Activated CD8-positive, alpha-beta T cell treated with anti-CD3 and anti-CD28 coated beads for 36 hours (primary cell): ENCODE measurements at regions of chr22 and their contacts with region 1.

Region 1: GRCh38 chr22:41237707-41238569 is 2.8 kb downstream of the CHADL start:
- DNase-seq: peak; percentile 86
- ATAC-seq: peak; percentile 96
- H3K4me3 Mint-ChIP-seq: peak overlapping the region; percentile 59
- H3K27ac Mint-ChIP-seq: no peak overlapping the region
- H3K4me1 Mint-ChIP-seq: peaks cover 7% of the 10 kb centered on the region
- H3K27me3 Mint-ChIP-seq: no peaks in the 10 kb centered on the region
- CTCF ChIP-seq: peak; percentile 12

Region 2: GRCh38 chr22:41074941-41075710 is 162.8 kb before region 1 on chr22:
- CTCF ChIA-PET with region 1: no interaction called
- POLR2A ChIA-PET with region 1: no interaction called
- intact Hi-C with region 1: no loop called
- DNase-seq: no peak
- ATAC-seq: no peak
- H3K4me3 Mint-ChIP-seq: no peak overlapping the region
- H3K27ac Mint-ChIP-seq: no peak overlapping the region
- H3K4me1 Mint-ChIP-seq: no peaks in the 10 kb centered on the region
- H3K27me3 Mint-ChIP-seq: no peaks in the 10 kb centered on the region
- CTCF ChIP-seq: no peak

Region 3: DNA sequence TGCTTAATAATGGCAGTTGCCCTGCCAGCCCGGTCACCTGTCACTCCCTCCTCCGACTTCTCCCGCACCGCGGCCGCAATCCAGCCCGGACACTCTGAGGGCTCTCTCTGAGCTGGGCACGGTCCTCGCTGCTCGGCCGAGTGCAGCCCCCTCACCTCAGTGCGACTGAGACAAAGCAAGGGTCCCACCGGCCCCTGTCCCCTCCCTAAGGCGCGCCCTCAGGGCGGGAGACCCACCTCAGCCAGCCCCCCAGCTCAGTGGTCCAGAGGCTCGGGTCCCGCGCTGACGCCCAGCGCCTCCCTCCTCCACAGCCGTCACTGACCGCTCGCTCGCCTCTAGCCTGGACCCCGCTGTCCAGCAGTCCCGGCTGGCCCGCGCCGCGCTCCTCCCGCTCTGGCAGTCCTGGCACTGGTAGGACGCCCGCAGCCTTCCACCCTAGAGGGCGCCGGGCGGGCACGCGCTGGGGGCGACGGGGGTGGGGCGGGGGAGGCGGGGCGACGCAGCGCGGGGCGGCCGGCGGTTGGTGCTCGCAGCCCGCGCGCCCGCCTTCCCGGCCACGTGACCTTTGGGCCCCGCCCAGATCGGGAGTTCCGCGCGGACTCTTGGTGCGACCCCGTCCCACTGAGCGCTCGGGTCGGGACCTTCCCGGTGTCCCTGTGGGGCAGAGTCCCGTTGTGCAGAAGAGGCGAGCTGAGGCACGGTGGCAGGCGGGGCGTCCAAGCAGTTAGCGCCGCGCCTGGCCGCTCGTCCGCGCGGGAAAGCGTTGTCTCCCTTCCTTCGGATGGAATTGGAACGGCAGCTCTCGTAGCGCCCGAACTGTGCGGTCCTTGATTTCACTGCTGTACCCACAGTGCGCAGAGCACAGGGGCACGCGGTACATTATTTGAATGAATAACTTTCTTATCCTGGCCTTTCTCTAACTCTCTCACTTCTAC is 40.6 kb before region 1 on chr22:
- CTCF ChIA-PET with region 1: interaction called, 15 read pairs
- POLR2A ChIA-PET with region 1: interaction called, 3 read pairs
- intact Hi-C with region 1: no loop called
- DNase-seq: peak; percentile 79
- ATAC-seq: peak; percentile 90
- H3K4me3 Mint-ChIP-seq: peak overlapping the region; percentile 74
- H3K27ac Mint-ChIP-seq: no peak overlapping the region
- H3K4me1 Mint-ChIP-seq: peaks cover 7% of the 10 kb centered on the region
- H3K27me3 Mint-ChIP-seq: peaks cover 9% of the 10 kb centered on the region
- CTCF ChIP-seq: no peak

Region 4: GRCh38 chr22:41206719-41207118 is 31.2 kb before region 1 on chr22:
- CTCF ChIA-PET with region 1: interaction called, 14 read pairs
- POLR2A ChIA-PET with region 1: interaction called, 3 read pairs
- intact Hi-C with region 1: no loop called
- DNase-seq: no peak
- ATAC-seq: no peak
- H3K4me3 Mint-ChIP-seq: peak overlapping the region; percentile 48
- H3K27ac Mint-ChIP-seq: peak overlapping the region; percentile 52
- H3K4me1 Mint-ChIP-seq: peaks cover 26% of the 10 kb centered on the region
- H3K27me3 Mint-ChIP-seq: peaks cover 3% of the 10 kb centered on the region
- CTCF ChIP-seq: no peak

Region 5: GRCh38 chr22:41217553-41218157 is 20.3 kb before region 1 on chr22:
- CTCF ChIA-PET with region 1: interaction called, 19 read pairs
- POLR2A ChIA-PET with region 1: interaction called, 3 read pairs
- intact Hi-C with region 1: no loop called
- DNase-seq: peak; percentile 65
- ATAC-seq: peak; percentile 99
- H3K4me3 Mint-ChIP-seq: peak overlapping the region; percentile 51
- H3K27ac Mint-ChIP-seq: peak overlapping the region; percentile 84
- H3K4me1 Mint-ChIP-seq: peaks cover 23% of the 10 kb centered on the region
- H3K27me3 Mint-ChIP-seq: no peaks in the 10 kb centered on the region
- CTCF ChIP-seq: no peak

Region 6: GRCh38 chr22:41226723-41227655 is 10.9 kb before region 1 on chr22:
- CTCF ChIA-PET with region 1: interaction called, 15 read pairs
- POLR2A ChIA-PET with region 1: interaction called, 8 read pairs
- intact Hi-C with region 1: no loop called
- DNase-seq: no peak
- ATAC-seq: no peak
- H3K4me3 Mint-ChIP-seq: no peak overlapping the region
- H3K27ac Mint-ChIP-seq: no peak overlapping the region
- H3K4me1 Mint-ChIP-seq: no peaks in the 10 kb centered on the region
- H3K27me3 Mint-ChIP-seq: no peaks in the 10 kb centered on the region
- CTCF ChIP-seq: no peak

Region 7: GRCh38 chr22:41334215-41334614 is 96.3 kb after region 1 on chr22:
- CTCF ChIA-PET with region 1: no interaction called
- POLR2A ChIA-PET with region 1: no interaction called
- intact Hi-C with region 1: no loop called
- DNase-seq: no peak
- ATAC-seq: no peak
- H3K4me3 Mint-ChIP-seq: no peak overlapping the region
- H3K27ac Mint-ChIP-seq: no peak overlapping the region
- H3K4me1 Mint-ChIP-seq: peaks cover 10% of the 10 kb centered on the region
- H3K27me3 Mint-ChIP-seq: no peaks in the 10 kb centered on the region
- CTCF ChIP-seq: no peak

Region 8: DNA sequence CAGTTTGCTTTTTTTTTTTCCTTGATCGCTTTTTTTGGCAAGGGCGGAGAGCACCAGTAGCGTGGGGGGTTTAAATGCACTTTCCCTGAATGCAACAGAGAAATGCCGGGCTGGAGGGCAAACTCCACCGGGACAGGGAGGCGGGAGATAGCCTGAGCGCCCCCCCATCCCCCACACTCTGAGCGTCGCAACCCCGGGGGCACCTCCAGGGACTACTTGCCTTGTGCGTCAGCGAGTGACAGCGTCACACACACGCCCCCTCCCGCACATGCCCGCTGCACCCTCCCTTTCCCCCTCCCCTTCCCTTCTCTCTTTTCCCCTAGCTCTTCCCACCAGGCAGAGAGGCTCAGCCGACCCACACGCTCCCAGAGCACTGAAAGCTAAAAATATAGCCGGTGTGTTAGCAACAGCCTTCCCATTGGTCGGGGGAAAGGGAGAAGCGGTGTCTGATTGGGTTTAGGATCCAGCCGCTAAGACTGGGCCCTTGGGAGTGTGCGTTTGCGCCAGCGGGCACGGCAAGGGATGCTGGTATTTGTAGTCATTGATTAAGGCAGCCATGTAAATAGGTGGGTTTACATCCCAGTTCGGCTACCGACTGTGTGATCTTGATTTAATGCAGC is 210.4 kb after region 1 on chr22:
- CTCF ChIA-PET with region 1: no interaction called
- POLR2A ChIA-PET with region 1: no interaction called
- intact Hi-C with region 1: no loop called
- DNase-seq: peak; percentile 95
- ATAC-seq: peak; percentile 67
- H3K4me3 Mint-ChIP-seq: peak overlapping the region; percentile 90
- H3K27ac Mint-ChIP-seq: peak overlapping the region; percentile 99
- H3K4me1 Mint-ChIP-seq: peaks cover 10% of the 10 kb centered on the region
- H3K27me3 Mint-ChIP-seq: no peaks in the 10 kb centered on the region
- CTCF ChIP-seq: no peak